ENCODE measurements at regions of chr15 and their contacts with region 1.

Region 1: GRCh38 chr15:57743424-57743823 is 36.9 kb downstream of the POLR2M start:
- DNase-seq: no peak
- H3K4me3 ChIP-seq: no peak overlapping the region
- H3K27ac ChIP-seq: no peak overlapping the region
- H3K4me1 ChIP-seq: peaks cover 0 to 7% (median 6%) of the 10 kb centered on the region in 4 experiments; a peak in 6 of 7 replicates
- H3K27me3 ChIP-seq: no peaks in the 10 kb centered on the region
- CTCF ChIP-seq: peak; percentile 47 to 65 (median 59)
- EP300 ChIP-seq: no peak
- POLR2A ChIP-seq: no peak
- RAD21 ChIP-seq: peak; percentile 66 to 78

Region 2: DNA sequence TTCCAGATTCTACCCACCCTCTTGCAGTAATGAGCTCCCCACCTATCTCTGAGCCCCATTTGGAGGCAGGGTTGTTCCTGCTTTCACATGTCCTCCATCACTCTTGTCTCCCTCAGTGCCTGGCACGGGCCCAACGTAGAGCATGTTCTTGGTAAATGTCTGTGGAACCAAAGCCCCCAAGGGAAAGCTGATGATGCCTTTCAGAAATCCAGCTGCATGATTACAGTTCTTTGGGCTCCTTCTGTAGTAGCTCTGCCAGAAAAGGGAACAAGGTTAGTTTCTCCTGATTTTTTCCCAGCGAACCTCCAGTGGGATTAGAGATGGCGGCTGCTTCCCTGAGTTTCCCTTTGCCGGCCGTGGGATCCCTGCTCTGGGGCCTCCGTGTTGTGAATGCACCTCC is 327.8 kb before region 1 on chr15:
- CTCF ChIA-PET with region 1: no interaction called
- POLR2A ChIA-PET with region 1: no interaction called
- DNase-seq: no peak
- H3K4me3 ChIP-seq: no peak overlapping the region
- H3K27ac ChIP-seq: no peak overlapping the region
- H3K4me1 ChIP-seq: peaks cover 0 to 6% (median under 1%) of the 10 kb centered on the region in 4 experiments; a peak in 1 of 7 replicates
- H3K27me3 ChIP-seq: no peaks in the 10 kb centered on the region
- CTCF ChIP-seq: no peak
- EP300 ChIP-seq: no peak
- POLR2A ChIP-seq: no peak
- RAD21 ChIP-seq: no peak

Region 3: GRCh38 chr15:57697588-57697987 is 45.8 kb before region 1 on chr15:
- CTCF ChIA-PET with region 1: no interaction called
- POLR2A ChIA-PET with region 1: no interaction called
- DNase-seq: no peak
- H3K4me3 ChIP-seq: no peak overlapping the region
- H3K27ac ChIP-seq: no peak overlapping the region
- H3K4me1 ChIP-seq: no peaks in the 10 kb centered on the region
- H3K27me3 ChIP-seq: peaks cover 0 to 3% (median under 1%) of the 10 kb centered on the region in 4 experiments; a peak in 4 of 7 replicates
- CTCF ChIP-seq: no peak
- EP300 ChIP-seq: no peak
- POLR2A ChIP-seq: no peak
- RAD21 ChIP-seq: no peak

Region 4: GRCh38 chr15:57769266-57769665 is 25.8 kb after region 1 on chr15:
- CTCF ChIA-PET with region 1: interaction called, 13 read pairs
- POLR2A ChIA-PET with region 1: no interaction called
- DNase-seq: no peak
- H3K4me3 ChIP-seq: no peak overlapping the region
- H3K27ac ChIP-seq: no peak overlapping the region
- H3K4me1 ChIP-seq: peaks cover 0 to 7% (median 4%) of the 10 kb centered on the region in 4 experiments; a peak in 3 of 7 replicates
- H3K27me3 ChIP-seq: no peaks in the 10 kb centered on the region
- CTCF ChIP-seq: no peak
- EP300 ChIP-seq: no peak
- POLR2A ChIP-seq: no peak
- RAD21 ChIP-seq: no peak

Region 5: DNA sequence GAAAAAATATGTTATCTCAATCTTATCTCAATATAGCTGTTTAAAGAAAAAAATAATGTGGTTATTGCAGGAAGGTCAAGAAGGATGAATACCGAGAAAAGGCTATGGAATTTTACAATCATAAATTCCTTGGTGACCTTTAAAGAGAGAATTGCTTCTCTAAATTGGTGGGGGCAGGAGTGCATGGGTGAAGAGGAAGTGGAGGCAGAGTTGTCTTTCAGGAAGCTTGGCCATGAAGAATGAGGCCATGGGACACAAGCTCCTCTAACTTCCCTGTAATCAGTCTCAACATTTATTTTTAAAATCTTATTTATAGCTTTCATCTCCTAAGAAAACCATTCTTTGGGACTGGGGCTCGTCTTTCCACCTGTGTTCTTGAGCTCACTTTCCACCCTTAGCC is 344.4 kb after region 1 on chr15:
- CTCF ChIA-PET with region 1: no interaction called
- POLR2A ChIA-PET with region 1: no interaction called
- DNase-seq: no peak
- H3K4me3 ChIP-seq: no peak overlapping the region
- H3K27ac ChIP-seq: no peak overlapping the region
- H3K4me1 ChIP-seq: no peaks in the 10 kb centered on the region
- H3K27me3 ChIP-seq: no peaks in the 10 kb centered on the region
- CTCF ChIP-seq: no peak
- EP300 ChIP-seq: no peak
- POLR2A ChIP-seq: no peak
- RAD21 ChIP-seq: no peak